ENCODE measurements at regions of chr6 and their contacts with region 1.

Region 1: GRCh38 chr6:10837995-10838793 is at the start of gene MAK:
- H3K4me3 Mint-ChIP-seq: peak within 1 kb of the TSS; percentile 79
- H3K27ac Mint-ChIP-seq: peak within 1 kb of the TSS; percentile 90
- H3K4me1 Mint-ChIP-seq: peaks cover 18% of the 10 kb centered on the region
- H3K27me3 Mint-ChIP-seq: peaks cover 58% of the 10 kb centered on the region

Region 2: GRCh38 chr6:10886691-10887535 is 48.7 kb after region 1 on chr6 and contains the start of gene SYCP2L:
- intact Hi-C with region 1: loop called (anchors 5 kb)
- H3K4me3 Mint-ChIP-seq: peak within 1 kb of the TSS; percentile 68
- H3K27ac Mint-ChIP-seq: no peak within 1 kb of the TSS
- H3K4me1 Mint-ChIP-seq: peaks cover 41% of the 10 kb centered on the region
- H3K27me3 Mint-ChIP-seq: peaks cover 56% of the 10 kb centered on the region

Region 3: DNA sequence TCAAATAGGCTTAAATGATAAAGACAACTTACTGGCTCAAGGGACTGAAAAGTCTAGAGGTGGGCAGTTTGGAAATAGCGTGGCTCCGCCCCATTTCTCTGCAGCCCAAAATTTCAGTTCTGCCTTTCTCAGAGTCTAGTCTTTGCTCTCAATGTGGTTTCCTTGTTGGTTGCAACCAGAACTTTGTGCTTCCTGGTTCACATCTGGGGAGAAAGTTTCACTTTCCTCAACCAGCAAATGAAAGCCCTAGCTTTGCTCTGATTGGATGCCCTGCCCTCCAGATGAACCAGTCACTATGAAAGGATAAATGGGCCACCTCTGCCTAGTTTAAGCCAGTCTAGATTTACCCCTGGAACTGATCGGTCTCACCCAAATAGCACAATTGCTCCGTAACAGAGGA is 63.6 kb after region 1 on chr6:
- intact Hi-C with region 1: loop called (anchors 5 kb)
- H3K4me3 Mint-ChIP-seq: peak overlapping the region; percentile 62
- H3K27ac Mint-ChIP-seq: peak overlapping the region; percentile 63
- H3K4me1 Mint-ChIP-seq: peaks cover 18% of the 10 kb centered on the region
- H3K27me3 Mint-ChIP-seq: peaks cover 3% of the 10 kb centered on the region

Measured in dendritic cell treated with granulocyte-macrophage colony-stimulating factor and Interleukin-4, amounts not matched to agents 40 ng/mL and 50 ng/mL, for 4 days (primary cell).